ENCODE measurements at regions of chr16 and their contacts with region 1.

Region 1: GRCh38 chr16:6777624-6778023 is 555.0 kb upstream of the RBFOX1 start:
- DNase-seq: no peak

Region 2: GRCh38 chr16:6725634-6726331 is 51.8 kb before region 1 on chr16:
- intact Hi-C with region 1: no loop called
- DNase-seq: no peak

Region 3: GRCh38 chr16:6836771-6837170 is 59.1 kb after region 1 on chr16:
- intact Hi-C with region 1: loop called (anchors 10 kb)
- DNase-seq: no peak